Posterior vena cava (tissue), 2 donors: ENCODE measurements at regions of chr7 and their contacts with region 1.

Region 1: GRCh38 chr7:75624134-75624832 is 114.5 kb downstream of the HIP1 start:
- DNase-seq: peak; percentile 85

Region 2: GRCh38 chr7:73992101-73992562 is 1632.2 kb before region 1 on chr7:
- intact Hi-C with region 1: loop called in 1 of 2 experiments (anchors 5 kb)
- DNase-seq: peak; percentile 92

Region 3: GRCh38 chr7:75584354-75584753 is 39.9 kb before region 1 on chr7:
- intact Hi-C with region 1: loop called in 1 of 2 experiments (anchors 1 kb)
- DNase-seq: no peak

Region 4: DNA sequence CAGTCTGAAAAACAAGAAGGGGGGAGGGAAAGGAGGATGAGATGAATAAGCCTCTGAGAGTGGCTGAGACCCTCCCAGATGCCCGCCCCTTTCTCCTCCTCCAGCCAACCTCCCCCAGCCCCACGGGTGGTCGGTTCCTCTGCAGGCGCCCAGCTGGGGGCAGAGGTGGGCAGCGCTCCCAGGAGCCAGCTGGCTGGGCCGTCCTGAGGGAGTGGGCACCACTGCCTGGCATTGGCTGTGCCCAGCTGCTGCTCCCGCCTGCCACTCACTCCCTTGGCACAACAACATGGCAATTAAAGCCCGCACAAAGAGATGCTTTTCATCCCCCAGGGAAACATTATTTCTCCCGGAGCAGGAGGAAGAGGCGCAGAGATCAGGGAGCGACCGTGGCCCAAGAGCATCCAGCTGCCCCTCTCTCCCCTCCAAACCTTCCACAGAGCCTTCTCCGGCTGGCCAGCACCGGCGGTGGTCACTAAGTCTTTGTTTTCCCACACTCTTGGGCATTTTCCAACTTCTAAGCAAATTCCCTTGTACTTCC is 25.0 kb before region 1 on chr7:
- intact Hi-C with region 1: no loop called
- DNase-seq: no peak